Sciatic nerve (tissue), 2 donors: ENCODE measurements at regions of chr18 and their contacts with region 1.

Region 1: DNA sequence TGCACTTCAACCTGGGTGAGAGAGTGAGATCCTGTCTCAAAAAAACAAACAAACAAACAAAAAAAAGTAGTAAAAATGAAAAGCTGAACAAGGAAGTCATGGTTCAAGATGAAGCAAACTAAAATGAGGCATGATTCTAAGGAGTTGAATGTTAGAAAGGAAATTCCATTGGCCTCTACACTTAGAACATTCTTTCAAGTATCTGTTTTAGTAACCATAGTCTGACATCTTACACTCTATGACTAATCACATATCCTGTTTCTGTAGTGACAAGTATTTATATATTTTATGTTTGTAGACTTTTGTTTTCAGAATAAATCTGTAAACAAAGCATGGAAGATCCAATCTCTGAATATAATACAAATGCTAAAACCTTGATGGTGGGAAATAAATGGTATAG is 164.1 kb downstream of the KIAA1328 start:
- DNase-seq: no peak
- ATAC-seq: no peak

Region 2: DNA sequence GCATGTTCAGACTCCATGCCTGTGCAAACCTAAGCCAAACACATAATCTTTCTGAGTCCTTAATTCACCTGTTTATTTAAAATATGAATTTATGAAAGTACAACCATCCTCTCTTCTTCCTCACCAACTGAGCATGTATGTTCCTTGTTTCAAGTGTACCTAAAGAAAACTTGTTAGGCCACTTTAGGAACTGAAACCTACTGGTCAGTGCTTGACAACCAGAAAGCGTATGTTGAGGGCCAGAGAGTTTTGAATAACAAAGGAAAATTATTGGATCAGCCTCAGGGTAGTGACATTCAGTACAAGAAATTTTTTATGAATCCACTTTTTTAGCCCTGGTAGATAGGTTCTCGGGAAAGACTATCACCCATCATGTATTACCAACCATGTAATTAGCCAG is 1420.1 kb after region 1 on chr18:
- intact Hi-C with region 1: loop called (anchors 5 kb)
- DNase-seq: no peak
- ATAC-seq: no peak